Heart right ventricle (tissue), 16 donors: ENCODE measurements at regions of chr11 and their contacts with region 1.

Region 1: GRCh38 chr11:86938900-86939880 is 16.0 kb downstream of the FZD4 start:
- DNase-seq: peak in 1 of 2 donors; percentile 32
- ATAC-seq: peak in 4 of 8 donors; percentile 34 to 42 (median 35)
- H3K4me3 ChIP-seq: peak overlapping the region in 4 of 10 donors; percentile 24 to 38 (median 33)
- H3K27ac ChIP-seq: peak overlapping the region; percentile 66 to 88 (median 80)
- H3K4me1 ChIP-seq: peaks cover 25 to 80% (median 63%) of the 10 kb centered on the region in 9 donors
- H3K27me3 ChIP-seq: no peaks in the 10 kb centered on the region
- CTCF ChIP-seq: peak; percentile 52 to 79 (median 74)

Region 2: GRCh38 chr11:87037450-87038234 is 98.5 kb after region 1 on chr11 and contains the start of gene TMEM135:
- intact Hi-C with region 1: loop called in 1 of 10 experiments (anchors 5 kb)
- DNase-seq: peak; percentile 95 to 96
- ATAC-seq: peak; percentile 98 to 100 (median 99)
- H3K4me3 ChIP-seq: peak within 1 kb of the TSS; percentile 54 to 93 (median 84)
- H3K27ac ChIP-seq: peak within 1 kb of the TSS; percentile 70 to 92 (median 90)
- H3K4me1 ChIP-seq: peaks cover 2 to 43% (median 29%) of the 10 kb centered on the region in 9 donors
- H3K27me3 ChIP-seq: no peaks in the 10 kb centered on the region
- CTCF ChIP-seq: peak in 4 of 9 donors; percentile 16 to 38 (median 30)
- total RNA-seq, gene TMEM135: 12.0 to 28.6 (median 17.5) TPM

Region 3: GRCh38 chr11:87081358-87081757 is 142.2 kb after region 1 on chr11:
- intact Hi-C with region 1: no loop called
- DNase-seq: no peak
- ATAC-seq: no peak
- H3K4me3 ChIP-seq: peak overlapping the region in 6 of 10 donors; percentile 16 to 35 (median 21)
- H3K27ac ChIP-seq: peak overlapping the region in 4 of 10 donors; percentile 12 to 68 (median 34)
- H3K4me1 ChIP-seq: peaks cover 0 to 18% (median 0%) of the 10 kb centered on the region in 9 donors
- H3K27me3 ChIP-seq: no peaks in the 10 kb centered on the region
- CTCF ChIP-seq: no peak

Region 4: GRCh38 chr11:87281496-87281895 is 342.3 kb after region 1 on chr11:
- intact Hi-C with region 1: loop called in 5 of 10 experiments (anchors 5 kb)
- DNase-seq: peak in 1 of 2 donors; percentile 24
- ATAC-seq: peak in 7 of 8 donors; percentile 57 to 90 (median 84)
- H3K4me3 ChIP-seq: no peak overlapping the region
- H3K27ac ChIP-seq: peak overlapping the region in 1 of 10 donors; percentile 11
- H3K4me1 ChIP-seq: peaks cover 0 to 25% (median 5%) of the 10 kb centered on the region in 9 donors
- H3K27me3 ChIP-seq: no peaks in the 10 kb centered on the region
- CTCF ChIP-seq: peak; percentile 14 to 69 (median 43)

Region 5: DNA sequence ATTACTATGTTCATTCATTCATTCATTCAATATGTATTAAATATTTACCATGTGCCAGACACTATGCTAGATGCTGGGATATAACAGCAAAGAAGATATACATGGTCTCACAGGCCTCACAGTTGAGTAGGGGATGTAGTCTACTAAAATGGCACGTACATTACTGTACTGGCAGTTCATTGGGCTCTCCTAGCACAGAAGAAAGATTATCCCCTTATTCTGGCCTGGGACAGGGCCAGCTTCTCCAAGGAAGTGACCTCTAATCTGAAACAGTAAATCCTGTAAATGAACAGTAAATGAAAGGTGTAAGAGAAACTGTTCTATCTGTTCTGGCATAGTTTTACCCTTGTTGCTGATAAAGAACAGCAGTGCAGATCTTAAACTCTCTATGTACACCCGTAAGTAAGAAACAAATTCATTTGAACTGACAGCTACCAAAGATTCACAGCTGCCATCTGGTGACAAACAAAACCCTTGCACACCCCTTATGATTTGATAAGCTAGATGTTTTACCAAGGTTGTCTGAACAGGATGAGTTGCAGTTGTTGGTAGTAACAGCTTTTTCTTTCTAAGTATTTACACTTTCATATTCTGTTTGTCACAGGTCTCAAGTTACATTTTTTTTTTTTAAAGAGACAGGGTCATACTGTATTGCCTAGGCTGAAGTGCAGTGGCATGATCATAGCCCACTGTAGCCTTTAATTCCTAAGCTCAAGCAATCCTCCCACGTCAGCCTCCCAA is 361.6 kb after region 1 on chr11:
- intact Hi-C with region 1: loop called in 1 of 10 experiments (anchors 5 kb)
- DNase-seq: no peak
- ATAC-seq: no peak
- H3K4me3 ChIP-seq: no peak overlapping the region
- H3K27ac ChIP-seq: peak overlapping the region in 1 of 10 donors; percentile 29
- H3K4me1 ChIP-seq: peaks cover 0 to 33% (median 6%) of the 10 kb centered on the region in 9 donors
- H3K27me3 ChIP-seq: no peaks in the 10 kb centered on the region
- CTCF ChIP-seq: peak in 1 of 9 donors; percentile 9